Natural killer cell (primary cell): ENCODE measurements at regions of chr4 and their contacts with region 1.

Region 1: GRCh38 chr4:98995183-98996055 is at the start of gene METAP1:
- DNase-seq: peak; percentile 94 to 98
- ATAC-seq: peak; percentile 85 to 94 (median 86)
- H3K4me3 ChIP-seq: peak within 1 kb of the TSS; percentile 57
- H3K4me3 Mint-ChIP-seq: peak within 1 kb of the TSS; percentile 90
- H3K27ac ChIP-seq: peak within 1 kb of the TSS; percentile 92
- H3K27ac Mint-ChIP-seq: peak within 1 kb of the TSS; percentile 94 to 95
- H3K4me1 ChIP-seq: peaks cover 12% of the 10 kb centered on the region
- H3K4me1 Mint-ChIP-seq: peaks cover 30 to 33% of the 10 kb centered on the region in 2 donors
- H3K27me3 ChIP-seq: no peaks in the 10 kb centered on the region
- H3K27me3 Mint-ChIP-seq: no peaks in the 10 kb centered on the region
- CTCF ChIP-seq: peak; percentile 63
- total RNA-seq, gene METAP1: 41.1 to 54.3 (median 41.5) TPM

Region 2: GRCh38 chr4:97646997-97647396 is 1348.4 kb before region 1 on chr4:
- intact Hi-C with region 1: no loop called
- DNase-seq: no peak
- ATAC-seq: no peak
- H3K4me3 ChIP-seq: no peak overlapping the region
- H3K4me3 Mint-ChIP-seq: no peak overlapping the region
- H3K27ac ChIP-seq: no peak overlapping the region
- H3K27ac Mint-ChIP-seq: no peak overlapping the region
- H3K4me1 ChIP-seq: no peaks in the 10 kb centered on the region
- H3K4me1 Mint-ChIP-seq: no peaks in the 10 kb centered on the region
- H3K27me3 ChIP-seq: no peaks in the 10 kb centered on the region
- H3K27me3 Mint-ChIP-seq: no peaks in the 10 kb centered on the region
- CTCF ChIP-seq: no peak

Region 3: GRCh38 chr4:98143001-98143899 is 852.2 kb before region 1 on chr4 and contains the start of gene STPG2:
- intact Hi-C with region 1: loop called (anchors 10 kb)
- DNase-seq: peak; percentile 87 to 97
- ATAC-seq: peak; percentile 100
- H3K4me3 ChIP-seq: peak within 1 kb of the TSS; percentile 87
- H3K4me3 Mint-ChIP-seq: peak within 1 kb of the TSS; percentile 98
- H3K27ac ChIP-seq: peak within 1 kb of the TSS; percentile 95
- H3K27ac Mint-ChIP-seq: peak within 1 kb of the TSS; percentile 94 to 95
- H3K4me1 ChIP-seq: peaks cover 13% of the 10 kb centered on the region
- H3K4me1 Mint-ChIP-seq: peaks cover 15 to 19% of the 10 kb centered on the region in 2 donors
- H3K27me3 ChIP-seq: no peaks in the 10 kb centered on the region
- H3K27me3 Mint-ChIP-seq: peaks cover 12 to 22% of the 10 kb centered on the region in 2 donors
- CTCF ChIP-seq: peak; percentile 54
- total RNA-seq, gene STPG2: 0.23 TPM in 1 of 3 donors, not detected in the others

Region 4: DNA sequence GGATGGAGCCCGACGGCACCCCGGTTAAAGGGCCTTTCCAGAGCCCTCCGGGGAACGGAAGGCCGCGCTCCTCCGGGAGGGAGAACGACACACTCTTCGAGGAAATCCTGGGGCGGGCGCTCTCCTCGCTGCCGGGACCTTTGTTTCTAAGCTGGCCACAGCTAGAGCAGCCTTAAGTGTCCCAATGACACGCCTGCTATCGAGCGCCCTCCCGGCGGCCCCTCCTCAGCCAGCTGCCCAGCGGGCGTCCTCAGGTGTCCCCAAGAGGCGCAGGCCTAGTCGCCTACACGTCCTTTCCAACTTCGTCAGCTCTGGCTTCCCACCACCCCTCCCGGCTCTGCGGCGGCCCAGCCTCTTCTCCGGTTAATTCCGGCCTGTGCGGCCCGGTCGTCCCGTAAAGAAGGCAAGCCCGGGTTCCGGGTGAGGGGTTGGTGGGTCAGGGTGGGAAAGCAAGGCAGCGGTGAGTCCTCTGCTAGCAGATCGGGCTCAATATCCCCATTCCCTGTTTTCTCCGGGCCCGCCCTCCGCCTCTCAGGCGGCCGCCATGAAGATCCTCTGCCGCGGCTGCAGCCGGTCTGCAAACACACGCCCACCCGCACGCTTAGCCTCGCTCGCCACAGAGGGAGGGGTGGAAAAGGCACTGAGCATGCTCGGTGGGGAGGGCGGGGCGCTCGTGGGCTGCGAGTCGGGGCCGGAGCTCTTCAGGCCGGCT is 734.7 kb before region 1 on chr4:
- intact Hi-C with region 1: loop called (anchors 5 kb)
- DNase-seq: peak; percentile 78 to 94
- ATAC-seq: peak; percentile 80 to 90 (median 84)
- H3K4me3 ChIP-seq: peak overlapping the region; percentile 96
- H3K4me3 Mint-ChIP-seq: peak overlapping the region; percentile 91
- H3K27ac ChIP-seq: peak overlapping the region; percentile 73
- H3K27ac Mint-ChIP-seq: peak overlapping the region; percentile 70 to 93
- H3K4me1 ChIP-seq: peaks cover 15% of the 10 kb centered on the region
- H3K4me1 Mint-ChIP-seq: peaks cover 43 to 46% of the 10 kb centered on the region in 2 donors
- H3K27me3 ChIP-seq: no peaks in the 10 kb centered on the region
- H3K27me3 Mint-ChIP-seq: no peaks in the 10 kb centered on the region
- CTCF ChIP-seq: no peak

Region 5: GRCh38 chr4:99054428-99054994 is 59.1 kb after region 1 on chr4:
- intact Hi-C with region 1: loop called (anchors 1 kb)
- DNase-seq: no peak
- ATAC-seq: no peak
- H3K4me3 ChIP-seq: no peak overlapping the region
- H3K4me3 Mint-ChIP-seq: no peak overlapping the region
- H3K27ac ChIP-seq: no peak overlapping the region
- H3K27ac Mint-ChIP-seq: peak overlapping the region in 1 of 2 donors; percentile 47
- H3K4me1 ChIP-seq: no peaks in the 10 kb centered on the region
- H3K4me1 Mint-ChIP-seq: peaks cover 9 to 18% of the 10 kb centered on the region in 2 donors
- H3K27me3 ChIP-seq: no peaks in the 10 kb centered on the region
- H3K27me3 Mint-ChIP-seq: no peaks in the 10 kb centered on the region
- CTCF ChIP-seq: no peak

Region 6: GRCh38 chr4:99088481-99089365 is 93.3 kb after region 1 on chr4 and contains the start of gene ADH5:
- intact Hi-C with region 1: loop called (anchors 1 kb)
- DNase-seq: peak; percentile 78 to 94
- ATAC-seq: peak; percentile 92 to 98 (median 93)
- H3K4me3 ChIP-seq: peak within 1 kb of the TSS; percentile 74
- H3K4me3 Mint-ChIP-seq: peak within 1 kb of the TSS; percentile 98
- H3K27ac ChIP-seq: peak within 1 kb of the TSS; percentile 89
- H3K27ac Mint-ChIP-seq: peak within 1 kb of the TSS; percentile 96 to 99
- H3K4me1 ChIP-seq: peaks cover 19% of the 10 kb centered on the region
- H3K4me1 Mint-ChIP-seq: peaks cover 59 to 66% of the 10 kb centered on the region in 2 donors
- H3K27me3 ChIP-seq: no peaks in the 10 kb centered on the region
- H3K27me3 Mint-ChIP-seq: no peaks in the 10 kb centered on the region
- CTCF ChIP-seq: no peak
- total RNA-seq, gene ADH5: 54.3 to 80.4 (median 62.5) TPM

Region 7: GRCh38 chr4:100093091-100093866 is 1097.9 kb after region 1 on chr4:
- intact Hi-C with region 1: loop called (anchors 5 kb)
- DNase-seq: peak; percentile 64 to 96
- ATAC-seq: peak; percentile 97 to 98 (median 97)
- H3K4me3 ChIP-seq: no peak overlapping the region
- H3K4me3 Mint-ChIP-seq: no peak overlapping the region
- H3K27ac ChIP-seq: peak overlapping the region; percentile 43
- H3K27ac Mint-ChIP-seq: peak overlapping the region; percentile 64 to 89
- H3K4me1 ChIP-seq: peaks cover 5% of the 10 kb centered on the region
- H3K4me1 Mint-ChIP-seq: peaks cover 18 to 26% of the 10 kb centered on the region in 2 donors
- H3K27me3 ChIP-seq: no peaks in the 10 kb centered on the region
- H3K27me3 Mint-ChIP-seq: peaks cover 0 to 8% of the 10 kb centered on the region in 2 donors
- CTCF ChIP-seq: peak; percentile 88